ENCODE measurements at regions of chr2 and their contacts with region 1.

Region 1: DNA sequence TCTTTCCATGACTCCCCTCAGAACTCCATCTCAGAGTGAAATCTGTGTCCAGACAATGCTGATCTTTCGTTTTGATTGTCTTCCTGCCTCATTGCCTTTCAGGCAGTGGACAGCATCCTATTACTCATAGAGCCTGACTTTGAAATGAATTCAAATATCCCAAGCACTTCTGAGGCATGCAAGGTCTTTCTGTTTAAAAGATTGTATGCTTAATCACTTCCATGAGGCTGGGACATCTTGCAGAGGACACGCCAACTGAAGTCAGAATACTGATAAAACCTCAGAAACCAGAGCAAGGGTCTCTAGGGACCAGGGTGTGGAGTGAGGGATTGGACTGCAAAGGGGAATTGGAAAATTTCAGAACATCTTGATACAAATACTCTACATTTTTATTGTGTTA is 836.5 kb upstream of the ID2 start:
- DNase-seq: peak; percentile 52
- H3K4me3 Mint-ChIP-seq: no peak overlapping the region
- H3K27ac Mint-ChIP-seq: peak overlapping the region; percentile 76
- H3K4me1 Mint-ChIP-seq: peaks cover 42% of the 10 kb centered on the region
- H3K27me3 Mint-ChIP-seq: no peaks in the 10 kb centered on the region

Region 2: GRCh38 chr2:7758073-7758759 is 87.1 kb before region 1 on chr2:
- intact Hi-C with region 1: loop called (anchors 1 kb)
- DNase-seq: peak; percentile 43
- H3K4me3 Mint-ChIP-seq: peak overlapping the region; percentile 15
- H3K27ac Mint-ChIP-seq: peak overlapping the region; percentile 82
- H3K4me1 Mint-ChIP-seq: peaks cover 16% of the 10 kb centered on the region
- H3K27me3 Mint-ChIP-seq: no peaks in the 10 kb centered on the region

Region 3: DNA sequence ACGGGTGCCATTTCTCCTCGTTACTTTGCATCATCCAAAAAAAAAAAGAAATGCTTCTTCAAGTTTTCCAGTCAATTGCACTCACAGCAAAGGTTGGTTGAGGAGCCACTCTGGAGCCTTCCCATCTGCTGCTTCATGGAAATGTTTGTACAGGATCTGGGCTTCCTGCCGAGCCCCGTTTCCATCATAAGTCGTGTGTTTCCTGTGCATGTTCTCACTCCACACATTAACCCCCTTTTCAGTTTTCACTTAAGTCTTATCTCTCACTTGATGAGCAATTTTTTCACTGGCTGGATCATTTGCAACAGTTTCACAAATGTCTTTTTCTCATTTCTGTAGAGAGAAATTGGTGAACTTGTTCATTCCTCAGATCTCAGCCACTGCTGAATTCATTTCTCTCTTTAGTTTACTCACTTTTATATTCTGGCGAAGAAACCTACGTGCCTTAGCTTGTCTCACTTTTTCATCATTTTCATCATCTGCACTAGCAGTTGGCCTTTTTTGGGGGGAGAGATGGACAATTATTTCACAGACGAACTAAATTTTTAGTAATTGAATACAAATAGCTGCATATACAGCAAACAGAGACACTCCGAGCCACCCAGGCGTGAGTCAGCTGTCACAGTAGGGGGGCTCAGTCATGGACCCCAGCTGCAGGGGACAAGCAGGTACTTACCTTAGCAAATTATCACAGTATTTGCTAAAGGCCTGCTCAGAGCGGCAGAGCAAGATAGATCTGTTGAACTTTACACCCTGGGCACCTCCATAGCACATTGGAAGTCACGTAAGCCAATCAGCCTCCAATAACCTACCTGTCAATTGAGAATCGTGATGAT is 85.7 kb after region 1 on chr2:
- intact Hi-C with region 1: loop called (anchors 2 kb)
- DNase-seq: peak; percentile 54
- H3K4me3 Mint-ChIP-seq: peak overlapping the region; percentile 1
- H3K27ac Mint-ChIP-seq: peak overlapping the region; percentile 76
- H3K4me1 Mint-ChIP-seq: peaks cover 10% of the 10 kb centered on the region
- H3K27me3 Mint-ChIP-seq: no peaks in the 10 kb centered on the region

Region 4: GRCh38 chr2:8049851-8050571 is 204.7 kb after region 1 on chr2:
- intact Hi-C with region 1: loop called (anchors 2 kb)
- DNase-seq: peak; percentile 81
- H3K4me3 Mint-ChIP-seq: peak overlapping the region; percentile 7
- H3K27ac Mint-ChIP-seq: peak overlapping the region; percentile 84
- H3K4me1 Mint-ChIP-seq: peaks cover 23% of the 10 kb centered on the region
- H3K27me3 Mint-ChIP-seq: no peaks in the 10 kb centered on the region

Measured in activated CD4-positive, alpha-beta T cell treated with anti-CD3 and anti-CD28 coated beads, Interleukin-2, amount 10 ng/mL, durations not matched to agents 24 days and 14 days (primary cell).